Breast epithelium (tissue), 4 donors: ENCODE measurements at regions of chr1 and their contacts with region 1.

Region 1: DNA sequence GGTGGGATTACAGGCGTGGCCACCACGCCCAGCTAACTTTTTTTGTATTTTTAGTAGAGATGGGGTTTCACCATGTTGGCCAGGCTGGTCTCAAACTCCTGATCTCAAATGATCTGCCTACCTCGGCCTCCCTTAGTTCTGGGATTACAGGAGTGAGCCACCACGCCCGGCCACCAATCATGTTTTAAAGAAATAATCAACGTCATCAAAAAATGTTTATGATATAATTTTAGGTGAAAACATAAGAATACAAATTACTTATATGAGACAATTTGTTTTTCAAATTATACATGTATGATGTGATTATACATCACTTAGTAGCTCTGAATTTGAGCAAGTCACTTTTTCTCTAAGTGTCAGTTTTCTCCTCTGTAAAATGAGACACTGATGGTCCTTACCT is 31.6 kb upstream of the SSBP3 start:
- DNase-seq: no peak
- H3K4me3 ChIP-seq: no peak overlapping the region
- H3K27ac ChIP-seq: no peak overlapping the region
- H3K4me1 ChIP-seq: no peaks in the 10 kb centered on the region
- H3K27me3 ChIP-seq: no peaks in the 10 kb centered on the region
- CTCF ChIP-seq: no peak
- POLR2A ChIP-seq: no peak

Region 2: GRCh38 chr1:52795464-52795863 is 1642.3 kb before region 1 on chr1:
- intact Hi-C with region 1: no loop called
- DNase-seq: no peak
- H3K4me3 ChIP-seq: no peak overlapping the region
- H3K27ac ChIP-seq: no peak overlapping the region
- H3K4me1 ChIP-seq: no peaks in the 10 kb centered on the region
- H3K27me3 ChIP-seq: no peaks in the 10 kb centered on the region
- CTCF ChIP-seq: no peak
- POLR2A ChIP-seq: no peak

Region 3: DNA sequence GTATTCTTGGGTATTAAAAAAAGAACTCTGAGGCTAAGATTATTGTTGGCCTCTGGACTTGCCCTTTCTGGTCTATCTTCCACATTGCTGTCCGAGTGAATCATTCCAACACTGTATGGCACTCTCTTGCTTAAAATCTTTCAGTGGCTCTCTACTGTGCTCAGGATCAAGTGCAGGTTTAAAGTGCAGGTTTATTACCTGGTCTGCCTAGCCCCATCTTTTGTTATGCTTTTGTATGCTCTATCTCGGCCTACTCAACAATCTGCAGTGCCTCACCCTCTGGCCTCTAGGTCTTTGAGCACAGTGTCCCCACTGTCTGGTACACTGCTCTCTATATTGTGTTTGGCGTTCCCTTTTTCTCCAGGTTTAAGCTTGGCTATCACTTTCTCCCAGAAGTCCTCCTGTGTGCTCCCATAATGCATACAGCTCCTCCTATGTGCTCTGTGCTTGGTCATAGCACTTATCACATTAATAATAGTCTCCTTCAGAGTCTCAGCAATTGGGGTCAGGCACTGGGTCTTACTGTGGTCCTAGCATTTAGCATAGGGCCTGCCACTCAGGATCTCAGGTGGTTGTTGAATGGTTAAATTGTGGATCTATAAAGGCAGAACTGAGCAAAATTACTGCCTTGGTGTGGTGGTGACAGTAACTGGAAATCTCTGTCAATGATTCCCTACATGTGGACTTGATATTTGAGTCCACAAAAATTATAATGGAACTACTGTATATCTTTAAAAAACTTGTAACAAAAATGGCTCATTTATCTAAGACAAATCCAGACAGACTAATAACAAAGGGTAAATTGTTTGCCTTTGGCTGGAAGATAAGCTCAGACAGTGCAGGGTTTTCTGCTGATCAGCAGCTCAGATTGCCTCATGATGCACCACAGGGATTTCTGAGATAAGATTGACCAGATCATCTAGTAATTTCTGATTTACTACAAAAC is 409.2 kb before region 1 on chr1:
- intact Hi-C with region 1: no loop called
- DNase-seq: no peak
- H3K4me3 ChIP-seq: no peak overlapping the region
- H3K27ac ChIP-seq: no peak overlapping the region
- H3K4me1 ChIP-seq: no peaks in the 10 kb centered on the region
- H3K27me3 ChIP-seq: no peaks in the 10 kb centered on the region
- CTCF ChIP-seq: no peak
- POLR2A ChIP-seq: no peak

Region 4: GRCh38 chr1:54421101-54421504 is 16.7 kb before region 1 on chr1:
- intact Hi-C with region 1: loop called (anchors 1 kb)
- DNase-seq: no peak
- H3K4me3 ChIP-seq: no peak overlapping the region
- H3K27ac ChIP-seq: no peak overlapping the region
- H3K4me1 ChIP-seq: no peaks in the 10 kb centered on the region
- H3K27me3 ChIP-seq: no peaks in the 10 kb centered on the region
- CTCF ChIP-seq: no peak
- POLR2A ChIP-seq: no peak

Region 5: DNA sequence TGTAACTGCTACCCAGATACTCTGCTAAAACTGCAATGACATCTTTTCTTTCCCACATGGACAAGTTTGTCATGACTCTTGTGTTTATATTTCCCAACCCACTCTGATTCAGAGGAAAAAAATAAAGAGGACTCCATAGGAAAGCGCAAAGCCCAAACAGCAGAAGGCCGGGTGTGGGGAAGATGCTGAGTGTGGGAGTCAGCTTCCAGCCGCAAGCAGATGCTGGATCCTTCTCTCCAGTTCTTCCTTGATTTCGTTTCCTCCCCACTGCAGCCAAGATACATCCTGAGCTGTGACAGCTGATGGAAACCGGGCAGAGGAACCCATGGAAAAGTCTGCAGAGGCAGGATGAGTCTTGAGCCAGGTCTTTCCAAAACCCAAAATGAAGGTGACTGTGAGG is 1643.4 kb after region 1 on chr1:
- intact Hi-C with region 1: no loop called
- DNase-seq: no peak
- H3K4me3 ChIP-seq: no peak overlapping the region
- H3K27ac ChIP-seq: peak overlapping the region in 1 of 2 donors; percentile 48
- H3K4me1 ChIP-seq: no peaks in the 10 kb centered on the region
- H3K27me3 ChIP-seq: no peaks in the 10 kb centered on the region
- CTCF ChIP-seq: no peak
- POLR2A ChIP-seq: no peak